BJ (cell line): ENCODE measurements at regions of chr7 and their contacts with region 1.

Region 1: DNA sequence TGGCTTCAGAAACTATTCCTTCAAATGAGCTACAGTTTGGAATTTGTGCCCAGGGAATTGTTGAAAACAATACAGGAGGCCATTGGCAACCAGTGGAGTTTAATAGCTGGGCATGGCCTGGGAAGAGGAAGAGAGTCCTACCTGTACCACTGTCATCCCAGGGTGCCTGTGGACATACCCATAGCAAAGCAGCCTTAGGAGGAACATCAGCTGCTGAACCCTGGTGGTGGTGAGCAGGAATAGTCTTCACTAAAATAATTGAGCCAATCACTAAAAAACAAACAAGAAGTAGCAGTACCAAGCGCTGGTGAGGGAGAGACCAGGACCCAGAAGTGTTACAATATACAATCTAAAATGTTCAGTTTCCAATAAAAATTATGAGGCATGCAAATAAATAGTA is 14.5 kb downstream of the IGFBP1 start:
- DNase-seq: no peak
- H3K4me3 ChIP-seq: no peak overlapping the region
- H3K27me3 ChIP-seq: no peaks in the 10 kb centered on the region; the same call in 1 of the 2 replicates
- CTCF ChIP-seq: no peak

Region 2: GRCh38 chr7:45890902-45891461 is 11.8 kb before region 1 on chr7:
- CTCF ChIA-PET with region 1: interaction called, 18 read pairs
- POLR2A ChIA-PET with region 1: no interaction called
- DNase-seq: no peak
- H3K4me3 ChIP-seq: no peak overlapping the region
- H3K27me3 ChIP-seq: peaks cover 3% of the 10 kb centered on the region
- CTCF ChIP-seq: peak; percentile 53